CD4-positive, alpha-beta T cell (primary cell): ENCODE measurements at regions of chr13 and their contacts with region 1.

Region 1: GRCh38 chr13:37074703-37075102 is 15.2 kb upstream of the SUPT20H start:
- DNase-seq: peak in 2 of 14 experiments; percentile 23 to 36
- ATAC-seq: no peak
- H3K4me3 ChIP-seq: no peak overlapping the region
- H3K4me3 Mint-ChIP-seq: no peak overlapping the region
- H3K27ac ChIP-seq: no peak overlapping the region
- H3K27ac Mint-ChIP-seq: no peak overlapping the region
- H3K4me1 ChIP-seq: no peaks in the 10 kb centered on the region
- H3K4me1 Mint-ChIP-seq: no peaks in the 10 kb centered on the region
- H3K27me3 ChIP-seq: no peaks in the 10 kb centered on the region
- H3K27me3 Mint-ChIP-seq: peaks cover 8% of the 10 kb centered on the region
- CTCF ChIP-seq: peak; percentile 54

Region 2: DNA sequence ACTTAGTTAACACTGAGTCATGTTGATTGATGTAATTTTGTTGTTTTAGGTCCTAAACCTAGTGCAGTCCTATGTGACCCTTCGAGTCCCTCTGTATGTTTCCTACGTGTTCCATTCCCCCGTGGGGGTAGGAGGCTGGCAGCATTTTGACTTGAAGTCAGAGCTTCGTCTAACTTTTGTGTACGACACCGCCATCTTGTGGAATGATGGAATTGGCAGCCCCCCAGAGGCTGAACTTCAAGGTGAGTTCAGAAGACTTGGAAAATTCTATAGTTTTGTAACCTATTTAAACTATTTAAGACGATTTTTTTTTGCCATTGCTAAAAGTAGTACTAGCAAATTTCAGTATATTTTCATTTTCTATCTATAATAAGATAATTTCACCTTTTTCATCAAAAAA is 1798.0 kb after region 1 on chr13:
- CTCF ChIA-PET with region 1: interaction called, 3 read pairs
- POLR2A ChIA-PET with region 1: no interaction called
- intact Hi-C with region 1: loop called (anchors 5 kb)
- DNase-seq: peak in 10 of 14 experiments; percentile 1 to 37 (median 12)
- ATAC-seq: no peak
- H3K4me3 ChIP-seq: no peak overlapping the region
- H3K4me3 Mint-ChIP-seq: no peak overlapping the region
- H3K27ac ChIP-seq: no peak overlapping the region
- H3K27ac Mint-ChIP-seq: no peak overlapping the region
- H3K4me1 ChIP-seq: no peaks in the 10 kb centered on the region
- H3K4me1 Mint-ChIP-seq: no peaks in the 10 kb centered on the region
- H3K27me3 ChIP-seq: no peaks in the 10 kb centered on the region
- H3K27me3 Mint-ChIP-seq: peaks cover 28% of the 10 kb centered on the region
- CTCF ChIP-seq: peak; percentile 46

Region 3: GRCh38 chr13:38914070-38914469 is 1839.4 kb after region 1 on chr13:
- CTCF ChIA-PET with region 1: no interaction called
- POLR2A ChIA-PET with region 1: no interaction called
- intact Hi-C with region 1: loop called in 1 of 2 experiments (anchors 5 kb)
- DNase-seq: no peak
- ATAC-seq: no peak
- H3K4me3 ChIP-seq: no peak overlapping the region
- H3K4me3 Mint-ChIP-seq: no peak overlapping the region
- H3K27ac ChIP-seq: no peak overlapping the region
- H3K27ac Mint-ChIP-seq: no peak overlapping the region
- H3K4me1 ChIP-seq: no peaks in the 10 kb centered on the region
- H3K4me1 Mint-ChIP-seq: no peaks in the 10 kb centered on the region
- H3K27me3 ChIP-seq: peaks cover 0 to 7% of the 10 kb centered on the region in 2 experiments
- H3K27me3 Mint-ChIP-seq: peaks cover 36% of the 10 kb centered on the region
- CTCF ChIP-seq: no peak

Region 4: GRCh38 chr13:39016787-39017186 is 1942.1 kb after region 1 on chr13:
- CTCF ChIA-PET with region 1: no interaction called
- POLR2A ChIA-PET with region 1: no interaction called
- intact Hi-C with region 1: loop called in 1 of 2 experiments (anchors 10 kb)
- DNase-seq: peak in 4 of 14 experiments; percentile 6 to 32 (median 27)
- ATAC-seq: peak; percentile 46
- H3K4me3 ChIP-seq: no peak overlapping the region
- H3K4me3 Mint-ChIP-seq: no peak overlapping the region
- H3K27ac ChIP-seq: no peak overlapping the region
- H3K27ac Mint-ChIP-seq: no peak overlapping the region
- H3K4me1 ChIP-seq: no peaks in the 10 kb centered on the region
- H3K4me1 Mint-ChIP-seq: no peaks in the 10 kb centered on the region
- H3K27me3 ChIP-seq: no peaks in the 10 kb centered on the region
- H3K27me3 Mint-ChIP-seq: no peaks in the 10 kb centered on the region
- CTCF ChIP-seq: peak; percentile 45